ENCODE measurements at regions of chr6 and their contacts with region 1.

Region 1: DNA sequence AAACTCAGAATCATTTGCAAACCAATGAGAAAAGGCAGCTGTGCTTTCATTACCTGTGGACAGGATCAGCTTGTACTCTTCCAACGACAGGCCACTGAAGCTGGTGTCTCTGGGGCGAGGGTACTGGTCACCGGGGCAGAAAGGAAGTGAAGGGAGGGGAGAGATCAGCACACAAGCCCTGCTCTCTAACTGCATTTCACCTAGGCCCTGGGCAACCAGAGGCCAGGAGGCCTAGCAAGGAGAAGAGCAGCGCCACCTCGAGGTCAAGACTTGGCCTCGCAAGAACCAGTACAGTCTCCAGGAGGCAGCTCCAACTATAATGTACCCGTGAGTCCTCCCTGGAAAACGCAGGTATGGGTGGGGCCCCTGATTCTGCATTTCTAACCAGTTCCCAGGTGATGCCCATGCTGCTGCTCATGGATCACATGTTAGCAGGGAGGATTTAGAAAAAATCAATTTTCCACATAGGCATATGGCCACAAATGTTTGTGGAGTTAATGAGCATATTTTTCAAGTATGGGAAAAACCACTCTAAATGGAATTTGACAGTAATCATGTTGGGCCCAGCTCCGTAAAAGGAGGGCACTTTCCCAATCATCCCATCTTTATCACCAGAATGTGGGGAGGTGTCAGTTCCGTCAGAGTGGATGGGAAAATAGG is 11.0 kb downstream of the UQCC2 start:
- DNase-seq: peak; percentile 81 to 88 (median 86)
- H3K4me3 ChIP-seq: no peak overlapping the region
- H3K27ac ChIP-seq: peak overlapping the region in 1 of 2 experiments; percentile 0
- H3K4me1 ChIP-seq: peaks cover 0 to 50% (median 41%) of the 10 kb centered on the region in 4 experiments
- H3K27me3 ChIP-seq: no peaks in the 10 kb centered on the region

Region 2: GRCh38 chr6:33585403-33586107 is 115.0 kb before region 1 on chr6:
- CTCF ChIA-PET with region 1: interaction called, 244 read pairs
- POLR2A ChIA-PET with region 1: interaction called, 4 read pairs
- DNase-seq: peak; percentile 84 to 90 (median 88)
- H3K4me3 ChIP-seq: peak overlapping the region in 2 of 7 experiments; percentile 33 to 64
- H3K27ac ChIP-seq: peak overlapping the region in 1 of 2 experiments; percentile 8
- H3K4me1 ChIP-seq: peaks cover 0 to 18% (median 13%) of the 10 kb centered on the region in 4 experiments
- H3K27me3 ChIP-seq: no peaks in the 10 kb centered on the region

Region 3: GRCh38 chr6:33607784-33608161 is 92.7 kb before region 1 on chr6:
- CTCF ChIA-PET with region 1: interaction called, 14 read pairs
- POLR2A ChIA-PET with region 1: no interaction called
- DNase-seq: peak in 2 of 3 donors; percentile 42 to 44
- H3K4me3 ChIP-seq: no peak overlapping the region
- H3K27ac ChIP-seq: no peak overlapping the region
- H3K4me1 ChIP-seq: peaks cover 0 to 6% (median 1%) of the 10 kb centered on the region in 4 experiments
- H3K27me3 ChIP-seq: no peaks in the 10 kb centered on the region

Region 4: GRCh38 chr6:33633462-33634158 is 66.9 kb before region 1 on chr6:
- CTCF ChIA-PET with region 1: interaction called, 46 read pairs
- POLR2A ChIA-PET with region 1: interaction called, 4 read pairs
- DNase-seq: peak; percentile 38 to 65 (median 58)
- H3K4me3 ChIP-seq: peak overlapping the region in 6 of 7 experiments; percentile 48 to 83 (median 65)
- H3K27ac ChIP-seq: no peak overlapping the region
- H3K4me1 ChIP-seq: peaks cover 0 to 20% (median 15%) of the 10 kb centered on the region in 4 experiments
- H3K27me3 ChIP-seq: peaks cover 0 to 13% (median 8%) of the 10 kb centered on the region in 5 experiments

Region 5: GRCh38 chr6:33670951-33671743 is 29.4 kb before region 1 on chr6:
- CTCF ChIA-PET with region 1: interaction called, 17 read pairs
- POLR2A ChIA-PET with region 1: no interaction called
- DNase-seq: no peak
- H3K4me3 ChIP-seq: no peak overlapping the region
- H3K27ac ChIP-seq: no peak overlapping the region
- H3K4me1 ChIP-seq: no peaks in the 10 kb centered on the region
- H3K27me3 ChIP-seq: no peaks in the 10 kb centered on the region

Measured in common myeloid progenitor, CD34-positive (primary cell).